Astrocyte of the cerebellum (primary cell): ENCODE measurements at regions of chr9 and their contacts with region 1.

Region 1: GRCh38 chr9:82152181-82152580 is 163.6 kb downstream of the SPATA31D1 start:
- DNase-seq: peak; percentile 54
- H3K4me3 ChIP-seq: no peak overlapping the region
- CTCF ChIP-seq: no peak

Region 2: DNA sequence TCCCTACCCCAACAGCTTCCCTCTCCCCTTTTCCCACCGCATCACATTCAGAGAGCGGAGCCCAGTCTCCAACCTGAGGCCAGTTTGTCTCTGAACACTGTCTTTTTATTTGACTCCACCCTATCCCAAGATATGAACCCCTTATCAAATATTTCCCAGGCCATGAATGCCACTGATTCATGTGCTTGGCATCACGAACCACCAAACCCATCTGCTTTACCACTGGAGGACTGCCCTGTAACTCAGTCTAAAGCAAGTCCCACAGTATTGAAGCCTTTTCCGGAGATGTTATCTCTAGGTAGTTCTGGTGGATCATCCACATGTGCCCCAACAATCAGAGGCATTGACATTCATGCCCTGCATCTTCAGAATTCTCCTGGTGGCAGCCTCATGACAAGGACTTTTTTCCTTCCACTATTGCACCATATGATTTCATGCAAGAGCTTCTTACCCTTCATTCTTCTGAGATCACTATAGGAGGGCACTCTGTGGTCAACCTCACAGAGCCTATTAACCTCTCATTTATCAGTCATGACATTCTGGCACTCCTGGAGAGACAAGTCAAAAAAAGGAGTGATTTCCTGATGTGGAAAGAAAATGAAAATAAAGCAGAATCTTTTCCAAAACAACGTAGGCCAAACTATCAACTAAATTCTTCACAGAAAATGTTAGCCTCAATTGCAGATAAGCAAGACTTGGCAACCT is 236.2 kb before region 1 on chr9:
- in situ Hi-C with region 1: no loop called
- DNase-seq: no peak
- H3K4me3 ChIP-seq: no peak overlapping the region
- CTCF ChIP-seq: no peak

Region 3: GRCh38 chr9:82080265-82080664 is 71.9 kb before region 1 on chr9:
- in situ Hi-C with region 1: no loop called
- DNase-seq: no peak
- H3K4me3 ChIP-seq: no peak overlapping the region
- CTCF ChIP-seq: no peak

Region 4: GRCh38 chr9:82117026-82117811 is 35.0 kb before region 1 on chr9:
- in situ Hi-C with region 1: loop called (anchors 5 kb)
- DNase-seq: peak; percentile 84
- H3K4me3 ChIP-seq: no peak overlapping the region
- CTCF ChIP-seq: no peak

Region 5: GRCh38 chr9:82397534-82397933 is 245.4 kb after region 1 on chr9:
- in situ Hi-C with region 1: no loop called
- DNase-seq: no peak
- H3K4me3 ChIP-seq: no peak overlapping the region
- CTCF ChIP-seq: no peak